WTC11 (cell line): ENCODE measurements at regions of chr5 and their contacts with region 1.

Region 1: GRCh38 chr5:135466178-135467050 is 14.3 kb upstream of the TIFAB start:
- DNase-seq: peak; percentile 91
- ATAC-seq: peak; percentile 83
- H3K4me3 Mint-ChIP-seq: peak overlapping the region; percentile 77
- H3K27ac Mint-ChIP-seq: no peak overlapping the region
- H3K4me1 Mint-ChIP-seq: peaks cover 23% of the 10 kb centered on the region
- H3K27me3 Mint-ChIP-seq: peaks cover 91% of the 10 kb centered on the region
- CTCF ChIP-seq: peak; percentile 66

Region 2: DNA sequence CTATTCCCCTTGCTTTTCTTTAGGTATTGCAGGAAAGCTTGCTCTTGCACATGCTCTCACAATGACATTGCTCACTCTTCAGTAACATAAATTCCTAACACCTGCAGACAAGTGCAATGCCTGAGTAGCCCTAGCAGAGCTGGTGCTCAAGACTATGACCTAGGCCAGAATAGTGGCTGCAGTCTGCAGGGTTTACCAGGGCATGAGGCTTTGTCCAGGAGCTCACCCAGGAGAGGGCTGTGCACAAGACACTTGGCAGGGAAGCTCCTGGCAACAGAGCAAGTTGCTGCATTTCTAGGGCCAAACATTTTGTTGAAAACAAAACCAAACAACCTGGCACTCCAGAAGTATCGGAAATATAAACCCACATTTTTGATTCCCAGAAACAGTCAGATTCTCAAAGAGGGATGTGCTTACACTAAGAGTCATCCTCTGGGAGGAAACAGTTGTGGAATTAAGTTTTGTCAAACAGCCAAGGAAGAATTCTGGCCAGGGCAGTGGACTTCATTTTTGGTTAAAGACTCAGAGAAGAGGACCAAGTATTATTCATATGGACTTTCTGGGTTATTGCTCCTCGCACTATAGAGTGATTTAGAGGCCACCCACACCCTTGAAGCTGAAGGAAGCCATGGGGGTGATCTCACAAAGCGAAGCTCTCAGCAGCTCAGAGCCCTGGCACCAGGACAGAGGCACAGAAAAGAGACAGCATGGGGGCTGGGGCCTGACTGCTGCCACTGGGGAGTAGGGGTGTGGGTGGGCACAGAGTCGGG is 112.3 kb before region 1 on chr5:
- CTCF ChIA-PET with region 1: no interaction called
- POLR2A ChIA-PET with region 1: no interaction called
- DNase-seq: no peak
- ATAC-seq: no peak
- H3K4me3 Mint-ChIP-seq: no peak overlapping the region
- H3K27ac Mint-ChIP-seq: no peak overlapping the region
- H3K4me1 Mint-ChIP-seq: no peaks in the 10 kb centered on the region
- H3K27me3 Mint-ChIP-seq: no peaks in the 10 kb centered on the region
- CTCF ChIP-seq: no peak

Region 3: DNA sequence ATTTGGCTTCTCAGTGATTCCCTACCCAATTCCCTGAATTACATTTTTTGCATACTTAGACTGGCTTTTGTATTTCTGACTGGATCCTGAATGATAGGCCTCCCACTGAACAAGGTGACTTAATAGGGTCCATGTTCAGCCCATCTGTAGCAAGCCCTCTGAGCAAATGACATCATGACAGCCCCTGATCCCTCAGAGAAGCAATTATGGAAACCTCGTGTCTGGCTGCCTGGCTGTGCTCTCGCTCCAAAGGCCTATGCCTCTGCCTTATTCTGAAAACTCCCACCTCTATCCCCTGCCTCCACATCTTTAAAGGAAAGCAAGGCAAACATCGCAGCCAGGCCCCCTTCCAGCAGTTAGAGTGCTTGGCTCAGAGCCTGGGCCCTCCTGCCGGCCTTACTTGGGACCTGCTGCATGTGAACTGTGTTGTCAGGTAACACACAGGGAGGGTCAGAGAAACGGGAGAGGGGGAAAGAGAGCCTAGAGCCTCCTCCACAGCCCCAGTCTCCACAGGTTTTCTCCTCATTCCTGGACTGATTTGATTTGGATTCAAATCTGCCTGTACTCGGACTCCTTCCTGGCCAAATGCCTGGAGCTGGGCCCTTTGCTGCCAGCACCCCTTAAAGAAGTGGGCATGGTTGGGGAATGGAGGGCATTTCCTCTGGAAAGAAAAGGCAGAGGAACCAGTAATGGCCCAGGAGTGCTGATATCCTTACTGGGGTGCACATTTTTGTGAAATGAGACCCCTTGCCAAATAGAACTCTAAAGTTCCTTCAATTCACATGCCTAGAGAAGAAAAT is 23.1 kb before region 1 on chr5:
- CTCF ChIA-PET with region 1: interaction called, 19 read pairs
- POLR2A ChIA-PET with region 1: no interaction called
- DNase-seq: no peak
- ATAC-seq: no peak; the same call in 1 of the 2 replicates
- H3K4me3 Mint-ChIP-seq: no peak overlapping the region
- H3K27ac Mint-ChIP-seq: no peak overlapping the region
- H3K4me1 Mint-ChIP-seq: peaks cover 8% of the 10 kb centered on the region
- H3K27me3 Mint-ChIP-seq: no peaks in the 10 kb centered on the region
- CTCF ChIP-seq: no peak

Region 4: DNA sequence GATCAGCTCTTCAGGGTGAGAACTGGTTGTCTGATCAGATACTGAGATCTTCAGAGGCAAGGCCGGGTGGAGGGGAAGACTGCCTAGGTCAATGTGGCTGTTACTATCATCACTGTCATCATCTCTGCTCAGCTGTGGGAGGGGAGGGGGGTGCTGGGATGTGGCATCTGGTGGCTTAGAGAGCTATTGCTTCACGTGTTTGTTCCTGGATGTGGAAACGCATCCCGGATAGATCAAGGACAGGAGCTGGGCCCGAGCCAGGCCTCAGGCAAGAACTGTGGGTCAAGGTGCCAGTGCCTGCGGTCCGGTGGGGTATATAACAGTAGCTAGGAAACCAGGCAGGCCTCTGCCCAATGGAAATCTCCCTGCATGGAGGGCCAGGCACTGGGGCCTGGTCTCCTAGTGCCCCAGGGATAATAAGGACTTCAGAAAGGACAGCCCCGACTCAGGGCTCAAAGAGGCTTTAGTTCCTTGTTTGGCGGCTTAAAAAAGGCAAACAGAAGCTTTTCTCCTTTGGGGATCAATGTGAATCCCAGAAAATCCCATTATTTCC is 16.0 kb after region 1 on chr5:
- CTCF ChIA-PET with region 1: interaction called, 47 read pairs
- POLR2A ChIA-PET with region 1: no interaction called
- DNase-seq: no peak
- ATAC-seq: no peak
- H3K4me3 Mint-ChIP-seq: no peak overlapping the region
- H3K27ac Mint-ChIP-seq: no peak overlapping the region
- H3K4me1 Mint-ChIP-seq: peaks cover 38% of the 10 kb centered on the region
- H3K27me3 Mint-ChIP-seq: peaks cover 28% of the 10 kb centered on the region
- CTCF ChIP-seq: no peak

Region 5: DNA sequence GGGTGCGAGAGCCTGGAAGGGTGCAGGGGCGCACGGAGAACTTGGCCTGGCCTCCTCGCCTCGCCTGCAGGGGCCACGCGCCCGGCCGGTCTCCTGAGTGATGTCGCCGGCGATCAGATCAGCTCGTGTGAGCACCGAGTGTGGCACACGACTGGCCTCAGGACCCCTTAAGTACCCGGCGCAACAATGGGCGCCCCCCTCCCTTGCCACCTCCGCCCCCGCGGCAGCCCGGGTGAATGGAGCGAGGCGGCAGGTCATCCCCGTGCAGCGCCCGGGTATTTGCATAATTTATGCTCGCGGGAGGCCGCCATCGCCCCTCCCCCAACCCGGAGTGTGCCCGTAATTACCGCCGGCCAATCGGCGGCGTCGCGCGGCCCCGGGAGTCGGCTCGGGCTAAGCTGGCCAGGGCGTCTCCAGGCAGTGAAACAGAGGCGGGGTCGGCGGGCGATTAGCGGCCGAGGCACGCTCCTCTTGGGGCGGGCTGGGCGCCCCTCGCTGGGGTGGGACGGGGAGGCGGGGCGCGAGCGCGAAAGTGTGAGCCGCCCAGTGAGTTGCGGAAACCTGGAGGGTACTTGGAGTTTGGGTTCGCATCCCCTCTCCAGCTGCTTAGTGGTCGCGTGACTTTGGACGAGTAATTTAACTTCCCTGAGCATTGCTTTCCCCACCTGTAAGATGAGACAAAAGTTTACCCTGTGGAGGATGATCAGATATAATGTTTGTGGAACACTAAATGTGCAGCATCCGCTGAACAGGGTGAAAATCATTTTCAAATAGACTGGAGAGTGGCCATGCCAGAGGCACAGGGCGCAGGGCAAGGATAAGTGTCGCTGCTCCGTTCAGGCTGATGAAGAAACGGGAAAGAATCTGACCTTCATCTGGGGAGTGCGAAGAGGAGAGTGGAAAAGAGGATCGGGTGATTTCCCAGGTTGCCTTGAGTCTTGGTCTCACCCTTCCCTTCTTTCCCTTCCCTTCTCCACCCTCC is 69.7 kb after region 1 on chr5 and contains the start of gene NEUROG1:
- CTCF ChIA-PET with region 1: interaction called, 48 read pairs
- POLR2A ChIA-PET with region 1: no interaction called
- DNase-seq: peak; percentile 92
- ATAC-seq: peak; percentile 67
- H3K4me3 Mint-ChIP-seq: peak within 1 kb of the TSS; percentile 64
- H3K27ac Mint-ChIP-seq: no peak within 1 kb of the TSS
- H3K4me1 Mint-ChIP-seq: peaks cover 15% of the 10 kb centered on the region
- H3K27me3 Mint-ChIP-seq: peaks cover 100% of the 10 kb centered on the region
- CTCF ChIP-seq: no peak
- total RNA-seq, gene NEUROG1: 0.13 to 0.18 TPM in 2 of 3 replicates, not detected in the other

Region 6: DNA sequence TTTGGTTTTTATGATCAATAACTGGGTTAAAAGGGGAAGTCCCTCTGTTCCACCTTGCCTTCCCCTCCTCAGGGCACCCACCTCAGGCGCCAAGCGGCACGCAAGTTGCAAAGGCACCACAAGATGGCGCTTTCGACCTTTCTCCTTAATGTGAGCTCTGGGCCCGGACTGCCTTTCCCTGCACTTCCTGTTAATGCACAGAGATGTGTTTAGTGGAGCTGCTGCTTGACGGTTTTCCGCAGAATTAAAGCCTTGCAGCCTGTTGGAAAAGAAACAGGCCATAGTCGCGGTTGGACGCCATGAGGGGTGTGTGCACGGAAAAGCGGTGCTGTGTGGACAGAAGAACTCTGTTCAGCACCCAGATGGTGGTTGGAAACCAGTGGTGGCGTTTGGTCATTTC is 94.4 kb after region 1 on chr5:
- CTCF ChIA-PET with region 1: interaction called, 524 read pairs
- POLR2A ChIA-PET with region 1: interaction called, 3 read pairs
- DNase-seq: peak; percentile 89
- ATAC-seq: peak; percentile 92
- H3K4me3 Mint-ChIP-seq: no peak overlapping the region
- H3K27ac Mint-ChIP-seq: no peak overlapping the region
- H3K4me1 Mint-ChIP-seq: peaks cover 25% of the 10 kb centered on the region
- H3K27me3 Mint-ChIP-seq: peaks cover 39% of the 10 kb centered on the region
- CTCF ChIP-seq: peak; percentile 77

Region 7: DNA sequence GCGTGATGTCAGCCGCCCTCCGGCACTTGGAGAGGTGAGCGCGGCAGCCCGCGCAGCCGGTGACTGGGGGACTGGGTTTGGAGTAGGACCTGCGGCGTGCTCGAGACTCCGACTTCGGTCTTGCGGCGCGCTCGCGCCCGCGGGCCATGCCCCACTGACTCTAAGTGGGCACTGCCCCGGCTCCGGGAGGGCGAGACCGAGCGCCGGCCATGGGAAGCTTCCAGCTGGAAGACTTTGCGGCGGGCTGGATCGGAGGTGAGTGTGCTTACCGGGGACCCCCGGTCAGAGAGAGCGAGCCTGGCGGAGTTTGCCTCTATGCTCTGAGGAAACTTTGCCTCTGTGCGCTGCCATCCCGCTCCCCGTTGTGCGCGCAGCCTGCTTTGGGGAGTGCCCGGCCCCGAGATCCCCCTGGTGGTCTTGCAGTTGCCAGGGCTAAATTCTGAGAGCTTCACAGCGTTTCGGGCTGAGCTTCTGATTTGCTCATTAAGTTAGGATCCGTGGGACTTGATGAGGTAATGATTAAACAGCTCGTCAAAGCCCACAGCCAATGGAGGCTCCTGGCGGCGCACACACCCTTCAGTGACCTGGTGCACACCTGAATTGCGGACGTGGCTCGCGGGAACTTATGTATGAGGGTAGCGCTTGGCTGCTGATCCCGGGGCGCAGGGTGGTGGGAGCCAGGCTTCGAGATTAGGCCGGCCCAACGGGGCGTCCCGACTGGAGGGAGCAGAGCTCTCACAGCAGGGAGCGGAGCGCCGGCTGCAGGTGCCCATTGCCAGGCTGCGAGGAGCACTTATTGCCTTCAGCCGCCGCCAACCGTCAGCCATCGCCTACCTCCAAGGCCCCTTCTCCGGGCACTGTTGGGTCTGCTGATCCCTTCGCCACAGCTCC is 368.5 kb after region 1 on chr5 and contains the start of gene SLC25A48:
- CTCF ChIA-PET with region 1: interaction called, 18 read pairs
- POLR2A ChIA-PET with region 1: no interaction called
- DNase-seq: peak; percentile 87
- ATAC-seq: peak; percentile 93
- H3K4me3 Mint-ChIP-seq: peak within 1 kb of the TSS; percentile 84
- H3K27ac Mint-ChIP-seq: no peak within 1 kb of the TSS
- H3K4me1 Mint-ChIP-seq: 0 out of 2 replicates have a peak, but pooled peaks cover 2% of the 10 kb centered on the region
- H3K27me3 Mint-ChIP-seq: peaks cover 89% of the 10 kb centered on the region
- CTCF ChIP-seq: 0 out of 2 replicates have a peak, but pooled peaks have one; percentile 9
- total RNA-seq, gene SLC25A48: 0.76 to 1.1 TPM (median 1.1 TPM) in 3 replicates